ENCODE measurements at regions of chr17 and their contacts with region 1.

Region 1: GRCh38 chr17:979538-980405 is at the start of gene NXN:
- DNase-seq: no peak
- ATAC-seq: peak; percentile 91
- H3K4me3 ChIP-seq: peak within 1 kb of the TSS; percentile 69 to 83
- H3K27ac ChIP-seq: peak within 1 kb of the TSS; percentile 93
- H3K4me1 ChIP-seq: peaks cover 21% of the 10 kb centered on the region
- H3K27me3 ChIP-seq: no peaks in the 10 kb centered on the region
- CTCF ChIP-seq: no peak; the same call in 1 of the 2 replicates
- total RNA-seq, gene NXN: 126 TPM

Region 2: GRCh38 chr17:794876-795275 is 184.9 kb before region 1 on chr17:
- CTCF ChIA-PET with region 1: interaction called, 14 read pairs
- POLR2A ChIA-PET with region 1: no interaction called
- in situ Hi-C with region 1: no loop called
- intact Hi-C with region 1: loop called (anchors 5 kb)
- DNase-seq: peak; percentile 42
- ATAC-seq: peak; percentile 69
- H3K4me3 ChIP-seq: no peak overlapping the region
- H3K27ac ChIP-seq: peak overlapping the region; percentile 66
- H3K4me1 ChIP-seq: peaks cover 17% of the 10 kb centered on the region
- H3K27me3 ChIP-seq: no peaks in the 10 kb centered on the region
- CTCF ChIP-seq: no peak; the same call in 1 of the 2 replicates

Region 3: GRCh38 chr17:1029196-1029921 is 49.6 kb after region 1 on chr17:
- CTCF ChIA-PET with region 1: no interaction called
- POLR2A ChIA-PET with region 1: no interaction called
- in situ Hi-C with region 1: no loop called
- intact Hi-C with region 1: no loop called
- DNase-seq: no peak
- ATAC-seq: no peak
- H3K4me3 ChIP-seq: no peak overlapping the region
- H3K27ac ChIP-seq: no peak overlapping the region
- H3K4me1 ChIP-seq: no peaks in the 10 kb centered on the region
- H3K27me3 ChIP-seq: no peaks in the 10 kb centered on the region
- CTCF ChIP-seq: no peak

Region 4: GRCh38 chr17:1078831-1079561 is 99.2 kb after region 1 on chr17:
- CTCF ChIA-PET with region 1: no interaction called
- POLR2A ChIA-PET with region 1: no interaction called
- in situ Hi-C with region 1: no loop called
- intact Hi-C with region 1: no loop called
- DNase-seq: no peak
- ATAC-seq: no peak
- H3K4me3 ChIP-seq: no peak overlapping the region
- H3K27ac ChIP-seq: no peak overlapping the region
- H3K4me1 ChIP-seq: peaks cover 38% of the 10 kb centered on the region
- H3K27me3 ChIP-seq: no peaks in the 10 kb centered on the region
- CTCF ChIP-seq: no peak